MCF 10A (cell line): ENCODE measurements at regions of chr12 and their contacts with region 1.

Region 1: GRCh38 chr12:52380271-52380694 is 5.2 kb downstream of the KRT84 start:
- DNase-seq: peak; percentile 59
- H3K4me3 Mint-ChIP-seq: no peak overlapping the region
- H3K27ac Mint-ChIP-seq: no peak overlapping the region
- H3K4me1 Mint-ChIP-seq: no peaks in the 10 kb centered on the region
- H3K27me3 Mint-ChIP-seq: no peaks in the 10 kb centered on the region
- CTCF ChIP-seq: peak; percentile 59

Region 2: DNA sequence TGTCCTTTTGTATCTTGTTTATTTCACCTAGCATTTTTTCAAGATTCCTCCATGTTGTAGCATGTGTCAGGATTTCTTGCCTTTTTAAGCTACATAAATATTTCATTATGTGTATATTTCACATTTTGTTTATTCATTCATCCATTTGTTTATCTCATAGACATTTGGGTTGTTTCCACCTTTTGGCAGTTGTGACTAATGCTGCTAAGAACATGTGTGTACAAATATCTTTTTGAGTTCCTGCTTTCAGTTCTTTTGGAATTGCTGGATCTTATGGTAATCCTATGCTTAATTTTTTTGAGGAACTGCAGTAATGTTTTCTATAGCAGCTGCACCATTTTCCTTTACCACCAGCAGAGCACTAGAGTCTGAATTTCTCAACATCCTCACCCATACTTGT is 726.9 kb before region 1 on chr12:
- CTCF ChIA-PET with region 1: no interaction called
- POLR2A ChIA-PET with region 1: no interaction called
- intact Hi-C with region 1: no loop called
- DNase-seq: no peak
- H3K4me3 Mint-ChIP-seq: no peak overlapping the region
- H3K27ac Mint-ChIP-seq: no peak overlapping the region
- H3K4me1 Mint-ChIP-seq: no peaks in the 10 kb centered on the region
- H3K27me3 Mint-ChIP-seq: peaks cover 53% of the 10 kb centered on the region
- CTCF ChIP-seq: no peak

Region 3: DNA sequence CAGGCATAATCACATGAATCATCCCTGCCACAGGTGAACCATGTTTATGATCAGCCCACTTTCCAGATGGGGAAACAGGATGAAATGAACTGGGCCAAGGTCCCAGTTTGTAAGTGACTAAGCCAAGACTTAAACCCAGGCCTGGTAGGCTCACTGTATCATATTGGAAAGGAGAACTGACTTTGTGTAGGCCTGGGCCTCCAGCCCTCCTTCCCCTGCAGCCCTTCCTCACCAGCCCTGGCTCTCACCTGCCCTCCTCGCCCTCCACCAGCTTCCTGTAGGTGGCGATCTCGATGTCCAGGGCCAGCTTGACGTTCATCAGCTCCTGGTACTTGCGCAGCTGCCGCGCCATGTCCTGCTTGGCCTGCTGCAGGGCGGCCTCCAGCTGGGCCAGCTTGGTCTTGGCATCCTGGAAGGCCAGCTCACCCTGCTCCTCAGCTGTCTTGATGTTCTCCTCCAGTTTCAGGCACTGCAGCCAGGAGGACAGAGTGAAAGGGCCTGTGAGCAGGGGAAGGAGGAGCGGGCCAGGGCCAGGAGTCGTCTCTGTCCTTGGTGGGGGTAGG is 208.3 kb before region 1 on chr12:
- CTCF ChIA-PET with region 1: no interaction called
- POLR2A ChIA-PET with region 1: no interaction called
- intact Hi-C with region 1: no loop called
- DNase-seq: peak; percentile 80
- H3K4me3 Mint-ChIP-seq: no peak overlapping the region
- H3K27ac Mint-ChIP-seq: peak overlapping the region; percentile 64
- H3K4me1 Mint-ChIP-seq: peaks cover 45% of the 10 kb centered on the region
- H3K27me3 Mint-ChIP-seq: no peaks in the 10 kb centered on the region
- CTCF ChIP-seq: peak; percentile 39

Region 4: GRCh38 chr12:52428121-52428520 is 47.8 kb after region 1 on chr12:
- CTCF ChIA-PET with region 1: interaction called, 13 read pairs
- POLR2A ChIA-PET with region 1: no interaction called
- intact Hi-C with region 1: no loop called
- DNase-seq: no peak
- H3K4me3 Mint-ChIP-seq: no peak overlapping the region
- H3K27ac Mint-ChIP-seq: no peak overlapping the region
- H3K4me1 Mint-ChIP-seq: no peaks in the 10 kb centered on the region
- H3K27me3 Mint-ChIP-seq: peaks cover 42% of the 10 kb centered on the region
- CTCF ChIP-seq: no peak

Region 5: DNA sequence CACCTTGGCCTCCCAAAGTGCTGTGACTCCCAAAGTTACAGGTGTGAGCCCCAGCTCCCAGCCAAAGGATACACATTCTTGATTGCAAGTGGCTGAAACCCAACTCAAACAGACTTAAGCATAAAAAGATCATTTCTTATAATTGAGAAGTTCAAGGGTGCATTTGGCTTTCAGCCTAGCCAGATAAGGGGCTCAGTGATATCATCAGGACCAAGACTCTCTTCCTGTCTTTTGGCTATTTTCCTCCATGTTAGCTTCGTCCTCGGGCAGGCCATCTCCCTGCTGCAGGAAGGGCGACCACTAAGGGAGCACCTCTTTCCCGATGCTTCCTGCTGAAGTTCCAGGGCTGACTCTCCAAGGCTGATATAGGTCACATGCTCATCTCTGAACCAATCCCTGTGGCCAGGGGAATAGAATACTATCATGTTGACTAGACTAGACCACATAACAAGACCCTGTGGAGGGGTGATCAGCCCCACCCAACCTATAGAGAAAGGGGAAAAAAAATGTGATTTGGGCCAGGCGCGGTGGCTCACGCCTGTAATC is 534.4 kb after region 1 on chr12:
- CTCF ChIA-PET with region 1: no interaction called
- POLR2A ChIA-PET with region 1: no interaction called
- intact Hi-C with region 1: no loop called
- DNase-seq: no peak
- H3K4me3 Mint-ChIP-seq: no peak overlapping the region
- H3K27ac Mint-ChIP-seq: no peak overlapping the region
- H3K4me1 Mint-ChIP-seq: peaks cover 6% of the 10 kb centered on the region
- H3K27me3 Mint-ChIP-seq: peaks cover 23% of the 10 kb centered on the region
- CTCF ChIP-seq: no peak